Activated T-helper 1 cell treated with anti-CD3 and anti-CD28 coated beads, Interleukin-12 subunit alpha, Interleukin-12 subunit beta, Interleukin-2, Interleukin-4 antibody, amounts not matched to agents 30 ng/mL and 10 ng/mL and 1 ng/mL, durations not matched to agents 14 hours and 24 hours and 36 hours (primary cell): ENCODE measurements at regions of chr16 and their contacts with region 1.

Region 1: GRCh38 chr16:56576585-56577293 is 11.9 kb downstream of the MT4 start:
- DNase-seq: peak; percentile 81
- H3K4me3 Mint-ChIP-seq: no peak overlapping the region
- H3K27ac Mint-ChIP-seq: no peak overlapping the region
- H3K4me1 Mint-ChIP-seq: peaks cover 10% of the 10 kb centered on the region
- H3K27me3 Mint-ChIP-seq: peaks cover 23% of the 10 kb centered on the region

Region 2: GRCh38 chr16:56137269-56137668 is 439.5 kb before region 1 on chr16:
- intact Hi-C with region 1: no loop called
- DNase-seq: no peak
- H3K4me3 Mint-ChIP-seq: no peak overlapping the region
- H3K27ac Mint-ChIP-seq: peak overlapping the region; percentile 0
- H3K4me1 Mint-ChIP-seq: peaks cover 6% of the 10 kb centered on the region
- H3K27me3 Mint-ChIP-seq: peaks cover 2% of the 10 kb centered on the region

Region 3: GRCh38 chr16:56513972-56514371 is 62.8 kb before region 1 on chr16:
- intact Hi-C with region 1: loop called (anchors 1 kb)
- DNase-seq: no peak
- H3K4me3 Mint-ChIP-seq: no peak overlapping the region
- H3K27ac Mint-ChIP-seq: no peak overlapping the region
- H3K4me1 Mint-ChIP-seq: no peaks in the 10 kb centered on the region
- H3K27me3 Mint-ChIP-seq: no peaks in the 10 kb centered on the region

Region 4: GRCh38 chr16:56625140-56625942 is 48.6 kb after region 1 on chr16 and contains the start of gene MT1E:
- intact Hi-C with region 1: loop called (anchors 1 kb)
- DNase-seq: peak; percentile 71
- H3K4me3 Mint-ChIP-seq: peak within 1 kb of the TSS; percentile 92
- H3K27ac Mint-ChIP-seq: peak within 1 kb of the TSS; percentile 93
- H3K4me1 Mint-ChIP-seq: peaks cover 23% of the 10 kb centered on the region
- H3K27me3 Mint-ChIP-seq: peaks cover 6% of the 10 kb centered on the region
- total RNA-seq, gene MT1E: 135 TPM in 2 replicates

Region 5: DNA sequence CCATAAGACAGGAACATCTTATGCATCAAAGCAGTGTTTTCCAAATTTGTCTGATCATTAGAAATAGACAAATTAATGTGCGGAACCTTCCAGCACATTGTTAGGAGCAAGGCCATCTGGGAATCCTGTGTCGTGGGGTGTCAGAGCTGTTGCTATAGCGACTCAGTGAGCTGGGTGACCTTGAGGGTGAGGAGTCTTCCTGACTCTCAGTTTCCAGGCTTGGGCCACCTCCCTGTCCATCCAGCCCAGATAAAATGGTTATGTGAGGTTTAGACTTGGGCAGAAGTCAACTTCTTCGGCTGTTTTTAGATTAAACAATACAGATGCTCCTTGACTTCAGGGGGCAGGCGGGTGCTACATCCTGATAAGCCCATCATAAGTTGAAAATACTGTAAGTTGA is 126.1 kb after region 1 on chr16:
- intact Hi-C with region 1: loop called (anchors 1 kb)
- DNase-seq: no peak
- H3K4me3 Mint-ChIP-seq: no peak overlapping the region
- H3K27ac Mint-ChIP-seq: no peak overlapping the region
- H3K4me1 Mint-ChIP-seq: peaks cover 11% of the 10 kb centered on the region
- H3K27me3 Mint-ChIP-seq: peaks cover 11% of the 10 kb centered on the region

Region 6: DNA sequence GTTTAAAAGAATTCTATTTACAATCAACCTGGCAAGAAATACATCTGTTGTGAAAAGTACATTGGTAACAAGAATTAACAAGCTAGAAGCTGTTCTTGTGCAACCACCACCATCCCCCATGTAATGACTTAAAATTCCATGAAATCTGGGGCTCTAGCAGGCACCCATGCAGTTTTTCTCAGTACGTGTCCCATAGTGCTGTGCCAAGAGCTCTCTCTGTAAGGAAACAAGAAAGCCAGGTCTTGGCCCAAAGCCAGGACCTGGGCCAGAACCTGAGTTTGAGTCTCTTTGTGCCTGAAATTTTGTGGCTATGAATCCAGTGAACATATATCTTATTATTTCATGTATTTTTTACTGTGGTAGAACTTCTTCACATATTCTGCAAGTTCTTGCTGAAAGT is 199.8 kb after region 1 on chr16:
- intact Hi-C with region 1: no loop called
- DNase-seq: no peak
- H3K4me3 Mint-ChIP-seq: no peak overlapping the region
- H3K27ac Mint-ChIP-seq: no peak overlapping the region
- H3K4me1 Mint-ChIP-seq: peaks cover 48% of the 10 kb centered on the region
- H3K27me3 Mint-ChIP-seq: no peaks in the 10 kb centered on the region

Region 7: GRCh38 chr16:56789360-56789759 is 212.6 kb after region 1 on chr16:
- intact Hi-C with region 1: loop called (anchors 1 kb)
- DNase-seq: peak; percentile 5
- H3K4me3 Mint-ChIP-seq: no peak overlapping the region
- H3K27ac Mint-ChIP-seq: no peak overlapping the region
- H3K4me1 Mint-ChIP-seq: no peaks in the 10 kb centered on the region
- H3K27me3 Mint-ChIP-seq: no peaks in the 10 kb centered on the region